K562 (cell line): ENCODE measurements at regions of chr9 and their contacts with region 1.

Region 1: GRCh38 chr9:91659529-91660495 is 236.2 kb upstream of the NFIL3 start:
- DNase-seq: peak; percentile 42 to 62 (median 54)
- ATAC-seq: peak; percentile 98
- H3K4me3 ChIP-seq: no peak overlapping the region
- H3K27ac ChIP-seq: no peak overlapping the region
- H3K4me1 ChIP-seq: no peaks in the 10 kb centered on the region
- H3K27me3 ChIP-seq: peaks cover 18 to 45% of the 10 kb centered on the region in 2 experiments
- CTCF ChIP-seq: peak; percentile 69 to 71 (median 70)
- EP300 ChIP-seq: no peak
- POLR2A ChIP-seq: no peak
- RAD21 ChIP-seq: peak; percentile 44 to 80; a peak in 3 of 4 replicates

Region 2: GRCh38 chr9:91611630-91612029 is 48.2 kb before region 1 on chr9:
- CTCF ChIA-PET with region 1: no interaction called
- POLR2A ChIA-PET with region 1: interaction called, 3 read pairs
- in situ Hi-C with region 1: no loop called
- intact Hi-C with region 1: loop called (anchors 5 kb)
- DNase-seq: no peak
- ATAC-seq: no peak
- H3K4me3 ChIP-seq: no peak overlapping the region
- H3K27ac ChIP-seq: no peak overlapping the region
- H3K4me1 ChIP-seq: no peaks in the 10 kb centered on the region
- H3K27me3 ChIP-seq: no peaks in the 10 kb centered on the region
- CTCF ChIP-seq: no peak
- EP300 ChIP-seq: no peak
- POLR2A ChIP-seq: no peak
- RAD21 ChIP-seq: no peak

Region 3: GRCh38 chr9:91727316-91727861 is 67.6 kb after region 1 on chr9:
- CTCF ChIA-PET with region 1: no interaction called
- POLR2A ChIA-PET with region 1: no interaction called
- in situ Hi-C with region 1: no loop called
- intact Hi-C with region 1: loop called (anchors 1 kb)
- DNase-seq: peak; percentile 69 to 79 (median 74)
- ATAC-seq: peak; percentile 100
- H3K4me3 ChIP-seq: no peak overlapping the region
- H3K27ac ChIP-seq: peak overlapping the region; percentile 41; the same call in 1 of the 3 replicates
- H3K4me1 ChIP-seq: peaks cover 6 to 8% of the 10 kb centered on the region in 2 experiments; a peak in 4 of 5 replicates
- H3K27me3 ChIP-seq: no peaks in the 10 kb centered on the region
- CTCF ChIP-seq: peak; percentile 64 to 82 (median 75)
- EP300 ChIP-seq: no peak
- POLR2A ChIP-seq: no peak
- RAD21 ChIP-seq: peak; percentile 61 to 64